Transverse colon (tissue), 4 donors: ENCODE measurements at regions of chr11 and their contacts with region 1.

Region 1: GRCh38 chr11:11787305-11788062 is 54.3 kb upstream of the USP47 start:
- DNase-seq: peak; percentile 81
- H3K4me3 ChIP-seq: no peak overlapping the region
- H3K27ac ChIP-seq: no peak overlapping the region
- H3K4me1 ChIP-seq: no peaks in the 10 kb centered on the region
- H3K27me3 ChIP-seq: no peaks in the 10 kb centered on the region
- CTCF ChIP-seq: peak; percentile 85 to 92 (median 87)
- EP300 ChIP-seq: no peak
- POLR2A ChIP-seq: no peak

Region 2: DNA sequence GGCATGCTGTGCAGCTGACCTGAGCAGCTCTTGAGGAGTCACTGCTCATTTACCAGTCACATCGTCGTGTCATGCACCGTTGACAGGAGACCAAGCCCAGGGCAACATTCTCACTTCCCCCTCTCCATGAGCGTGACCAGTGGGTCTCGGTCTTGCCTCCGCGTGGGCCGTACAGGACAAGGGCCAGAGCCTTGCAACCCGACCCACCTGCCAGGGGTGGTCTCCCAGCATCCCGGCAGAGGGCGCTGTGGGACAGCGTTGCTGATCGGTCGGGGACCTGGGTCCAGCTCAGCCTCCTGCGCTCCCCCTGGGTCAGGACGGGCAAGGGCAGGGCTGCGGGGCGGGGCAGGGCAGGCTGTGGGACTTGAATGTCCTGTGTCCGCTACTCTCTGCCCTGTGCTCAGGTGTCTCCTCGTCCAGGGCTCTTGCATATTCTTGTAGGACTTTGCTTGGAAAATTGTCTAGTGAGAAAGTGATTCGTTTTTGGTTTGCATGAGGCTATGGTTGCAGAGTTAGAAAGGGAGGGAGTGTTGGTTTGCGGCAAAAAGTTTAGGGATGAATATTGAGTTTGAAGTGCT is 995.0 kb before region 1 on chr11:
- in situ Hi-C with region 1: loop called in 3 of 4 experiments (anchors 10 kb)
- intact Hi-C with region 1: loop called (anchors 5 kb)
- DNase-seq: peak; percentile 91
- H3K4me3 ChIP-seq: no peak overlapping the region
- H3K27ac ChIP-seq: no peak overlapping the region
- H3K4me1 ChIP-seq: peaks cover 0 to 9% (median 3%) of the 10 kb centered on the region in 4 donors
- H3K27me3 ChIP-seq: no peaks in the 10 kb centered on the region
- CTCF ChIP-seq: peak; percentile 85 to 96 (median 89)
- EP300 ChIP-seq: no peak
- POLR2A ChIP-seq: no peak

Region 3: GRCh38 chr11:11022125-11022730 is 765.3 kb before region 1 on chr11:
- in situ Hi-C with region 1: loop called in 2 of 4 experiments (anchors 5 to 10 kb)
- intact Hi-C with region 1: loop called (anchors 5 kb)
- DNase-seq: no peak
- H3K4me3 ChIP-seq: no peak overlapping the region
- H3K27ac ChIP-seq: no peak overlapping the region
- H3K4me1 ChIP-seq: no peaks in the 10 kb centered on the region
- H3K27me3 ChIP-seq: no peaks in the 10 kb centered on the region
- CTCF ChIP-seq: peak; percentile 49 to 56 (median 52)
- EP300 ChIP-seq: no peak
- POLR2A ChIP-seq: no peak

Region 4: DNA sequence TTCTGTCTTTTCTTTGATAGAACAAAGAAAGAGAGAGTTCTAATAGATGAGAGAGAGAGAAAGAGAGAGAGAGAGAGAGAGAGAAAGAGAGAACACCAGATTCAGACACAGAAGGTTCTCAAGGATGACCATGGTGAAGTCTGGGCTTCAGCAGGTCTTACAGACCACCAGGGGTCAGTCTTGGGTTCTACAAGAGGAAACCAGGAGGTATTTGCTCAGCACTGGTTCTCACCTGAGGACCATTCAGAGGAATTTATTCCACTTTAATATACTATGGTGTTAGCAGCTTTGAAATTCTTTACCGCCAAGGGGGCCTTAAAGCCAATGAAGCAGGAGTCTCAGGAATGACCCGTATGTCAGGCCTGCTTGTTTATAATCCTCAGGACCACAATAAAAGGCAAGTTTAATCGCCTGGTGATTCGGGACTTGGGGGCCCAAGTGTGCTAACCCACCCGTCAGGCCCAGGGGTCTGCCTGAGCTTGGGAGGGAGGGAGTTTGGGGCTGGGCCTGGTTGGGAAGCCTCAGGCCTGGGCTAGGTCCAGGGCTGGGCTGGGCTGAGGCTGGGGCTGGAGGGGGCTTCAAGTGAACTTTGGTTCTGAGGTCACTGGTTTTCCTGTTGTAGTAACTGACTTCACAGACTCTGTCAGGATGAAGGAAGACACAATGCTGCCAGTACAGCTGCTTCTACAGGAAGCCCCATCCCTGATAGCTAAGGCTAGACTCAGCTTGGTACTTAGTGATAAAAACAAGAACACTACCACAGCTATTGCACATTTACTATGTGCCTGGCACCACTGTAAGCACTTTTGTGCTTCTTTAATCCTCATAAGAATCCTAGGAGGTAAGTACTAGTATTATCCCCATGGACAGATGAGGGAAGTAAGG is 750.4 kb before region 1 on chr11:
- in situ Hi-C with region 1: loop called in 2 of 4 experiments (anchors 5 to 10 kb)
- intact Hi-C with region 1: loop called (anchors 5 kb)
- DNase-seq: no peak
- H3K4me3 ChIP-seq: no peak overlapping the region
- H3K27ac ChIP-seq: peak overlapping the region; percentile 24 to 78 (median 67)
- H3K4me1 ChIP-seq: peaks cover 3 to 25% (median 10%) of the 10 kb centered on the region in 4 donors
- H3K27me3 ChIP-seq: no peaks in the 10 kb centered on the region
- CTCF ChIP-seq: peak; percentile 60 to 74 (median 64)
- EP300 ChIP-seq: no peak
- POLR2A ChIP-seq: no peak

Region 5: DNA sequence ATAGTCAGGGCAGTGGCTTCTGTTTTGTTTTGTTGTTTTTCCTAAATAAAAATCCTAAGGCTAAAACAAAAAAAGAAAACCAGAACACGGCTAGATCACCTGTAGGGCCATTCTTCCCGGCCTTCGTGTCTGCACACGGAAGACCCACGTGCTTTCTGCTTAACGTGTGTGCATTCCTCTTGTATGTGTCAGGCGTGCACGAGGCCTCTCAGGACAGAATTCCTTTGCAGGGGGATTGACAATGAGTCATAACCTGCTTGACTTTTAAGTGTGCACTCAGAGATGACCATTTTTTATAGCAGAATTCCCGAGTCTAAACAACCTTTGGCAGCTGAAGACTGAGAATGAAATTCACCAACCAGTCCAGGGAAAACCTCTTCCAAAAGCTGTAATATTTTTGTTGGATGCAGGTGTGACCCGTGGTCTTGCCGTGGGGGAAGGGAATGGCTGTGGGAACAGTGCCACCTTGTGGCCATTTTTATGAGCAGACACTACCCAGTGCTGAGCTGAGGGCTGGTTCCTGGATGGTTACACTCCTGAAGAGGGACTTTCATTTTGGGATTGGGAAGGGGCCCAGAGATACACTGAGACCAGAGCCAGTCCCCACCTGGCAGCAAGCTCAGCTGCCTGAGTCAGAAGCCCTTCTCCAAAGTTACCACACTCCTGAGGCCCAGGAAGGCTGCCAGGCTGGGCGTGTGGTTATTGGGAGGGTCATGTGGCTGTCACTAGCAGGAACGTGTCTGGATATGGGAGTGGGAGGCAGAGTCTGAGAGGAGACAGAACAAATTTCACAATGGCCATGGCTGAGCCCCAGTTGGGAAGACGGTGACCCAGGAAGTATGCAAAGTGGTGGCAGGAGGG is 256.7 kb after region 1 on chr11:
- in situ Hi-C with region 1: loop called in 2 of 4 experiments (anchors 5 to 10 kb)
- intact Hi-C with region 1: no loop called
- DNase-seq: peak; percentile 73
- H3K4me3 ChIP-seq: no peak overlapping the region
- H3K27ac ChIP-seq: peak overlapping the region; percentile 36 to 66 (median 40)
- H3K4me1 ChIP-seq: peaks cover 0 to 15% (median 9%) of the 10 kb centered on the region in 4 donors
- H3K27me3 ChIP-seq: no peaks in the 10 kb centered on the region
- CTCF ChIP-seq: peak; percentile 87 to 96 (median 88)
- EP300 ChIP-seq: peak; percentile 50
- POLR2A ChIP-seq: no peak